GM10248 (cell line): ENCODE measurements at regions of chr2 and their contacts with region 1.

Region 1: GRCh38 chr2:135741395-135742324 is at the start of gene UBXN4:
- DNase-seq: peak; percentile 95
- CTCF ChIP-seq: peak; percentile 35

Region 2: DNA sequence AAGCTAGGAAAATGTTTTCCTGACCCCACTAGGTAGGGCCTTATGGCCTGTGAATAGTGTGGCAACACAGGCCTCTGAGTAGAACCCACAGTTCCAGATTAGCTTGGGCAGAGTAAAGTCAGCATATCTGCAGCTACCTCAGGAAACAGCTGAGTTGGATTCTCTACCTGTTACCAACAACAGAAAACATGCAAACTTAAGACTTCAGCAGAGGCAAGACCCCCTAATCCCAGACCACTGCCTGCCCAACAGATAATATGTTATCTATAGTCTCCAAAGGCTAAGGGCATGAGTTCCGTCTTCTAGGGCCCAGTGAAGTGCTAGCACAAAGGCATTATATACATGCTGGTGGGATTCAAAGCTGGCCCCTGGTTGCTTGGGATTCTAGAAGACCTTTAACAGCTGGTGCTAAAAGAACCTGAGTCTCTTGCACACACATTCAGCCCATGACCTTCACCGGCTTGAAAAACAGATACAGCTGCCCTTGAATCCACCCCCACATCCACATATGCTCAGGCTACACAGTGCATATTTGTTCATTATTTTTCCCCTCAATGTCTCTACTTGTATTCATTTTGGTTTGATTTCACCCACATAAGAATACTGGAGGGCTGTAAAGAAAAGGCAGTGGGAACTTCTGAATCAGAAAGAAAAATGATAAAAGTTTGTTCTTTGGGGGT is 13.5 kb before region 1 on chr2:
- CTCF ChIA-PET with region 1: interaction called, 10 read pairs
- POLR2A ChIA-PET with region 1: interaction called, 3 read pairs
- DNase-seq: no peak
- CTCF ChIP-seq: no peak

Region 3: GRCh38 chr2:135756692-135757091 is 15.0 kb after region 1 on chr2:
- CTCF ChIA-PET with region 1: interaction called, 24 read pairs
- POLR2A ChIA-PET with region 1: interaction called, 3 read pairs
- DNase-seq: no peak
- CTCF ChIP-seq: no peak